Activated T-helper 2 cell treated with anti-CD3 and anti-CD28 coated beads, Interferon-gamma antibody, Interleukin-2, Interleukin-4, amounts not matched to agents 10 μg/mL and 5 μg/mL and 100 μg/mL, durations not matched to agents 14 hours and 24 hours and 36 hours (primary cell): ENCODE measurements at regions of chr17 and their contacts with region 1.

Region 1: DNA sequence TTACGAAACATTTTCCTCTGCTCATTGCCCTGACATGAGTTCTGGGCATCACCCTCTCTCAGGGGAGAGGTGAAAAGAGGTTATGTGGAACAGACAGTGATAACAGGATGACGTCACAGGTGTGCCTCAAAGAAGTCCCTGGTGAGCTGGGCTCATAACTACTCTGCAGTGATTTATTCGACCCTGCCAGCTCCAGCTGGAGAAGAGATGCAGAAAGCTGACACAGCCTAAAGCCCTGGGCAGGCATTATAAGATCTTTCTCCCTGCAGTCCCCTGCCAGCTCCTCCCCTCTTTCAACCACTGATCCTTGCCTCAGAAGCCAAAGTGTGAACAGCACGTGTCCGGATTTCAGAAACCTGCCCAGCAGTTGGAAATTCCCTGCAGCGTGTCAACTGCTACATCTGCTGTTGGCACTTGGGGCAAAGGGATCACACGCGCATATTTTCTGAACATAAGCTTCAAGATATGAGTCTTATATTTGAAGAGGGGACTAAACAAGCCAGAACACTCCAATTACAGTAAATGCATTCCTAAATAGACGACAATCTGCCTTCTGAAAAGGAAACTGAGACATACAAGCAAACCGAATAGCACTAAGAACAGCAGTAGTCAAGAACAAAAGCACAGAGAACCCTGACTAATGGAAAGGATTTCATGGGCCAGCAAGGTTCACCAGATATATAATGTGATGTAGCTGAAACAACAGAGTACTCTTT is 80.5 kb downstream of the SMG6 start:
- DNase-seq: no peak
- H3K4me3 Mint-ChIP-seq: no peak overlapping the region
- H3K27ac Mint-ChIP-seq: peak overlapping the region; percentile 61
- H3K4me1 Mint-ChIP-seq: peaks cover 42% of the 10 kb centered on the region
- H3K27me3 Mint-ChIP-seq: no peaks in the 10 kb centered on the region

Region 2: DNA sequence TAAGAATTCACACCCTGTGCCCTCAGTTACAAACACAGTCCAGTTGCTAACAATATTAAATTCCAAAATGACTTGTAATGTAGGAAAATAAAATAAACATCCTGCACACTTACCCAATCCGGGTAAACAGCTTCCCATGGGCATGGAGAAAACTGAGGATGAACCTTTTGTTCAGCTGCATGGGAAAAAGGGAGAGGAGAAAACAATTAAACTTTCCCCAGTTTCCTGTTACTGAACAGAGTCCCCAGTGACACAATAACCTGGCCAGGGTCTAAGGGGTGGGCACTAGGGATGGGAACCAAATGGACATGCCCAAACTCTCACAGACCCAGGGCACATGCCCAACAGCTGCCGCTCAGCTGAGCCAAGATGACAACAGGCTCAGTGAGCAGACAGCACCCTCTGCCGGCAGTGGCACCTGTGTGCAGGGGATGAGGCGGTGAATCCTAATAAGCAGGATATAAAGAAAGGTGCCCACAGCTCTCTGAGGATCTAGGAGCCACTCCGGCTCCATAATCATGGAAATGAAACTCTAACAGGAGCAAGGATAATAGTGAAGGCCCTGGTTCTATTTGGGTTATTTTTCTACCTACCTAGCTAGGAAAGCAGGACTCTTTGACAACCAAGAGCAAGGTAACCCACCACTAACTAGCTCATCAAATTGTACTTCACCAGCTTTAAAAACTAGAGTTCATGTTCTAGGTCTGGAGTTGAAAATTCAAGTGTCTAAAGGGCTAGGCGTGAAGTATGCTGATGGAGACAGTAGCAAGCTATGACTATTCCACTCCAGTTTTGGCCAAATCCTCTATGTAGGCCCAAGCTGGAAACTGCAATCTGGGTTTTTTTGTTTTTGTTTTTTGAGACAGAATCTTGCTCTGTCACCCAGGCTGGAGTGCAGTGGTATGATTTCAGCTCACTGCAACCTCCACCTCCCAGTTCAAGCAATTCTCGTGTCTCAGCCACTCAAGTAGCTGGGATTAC is 21.8 kb after region 1 on chr17:
- intact Hi-C with region 1: loop called (anchors 2 kb)
- DNase-seq: peak; percentile 72
- H3K4me3 Mint-ChIP-seq: no peak overlapping the region
- H3K27ac Mint-ChIP-seq: peak overlapping the region; percentile 50
- H3K4me1 Mint-ChIP-seq: peaks cover 70% of the 10 kb centered on the region
- H3K27me3 Mint-ChIP-seq: no peaks in the 10 kb centered on the region